ENCODE measurements at regions of chr1 and their contacts with region 1.

Region 1: GRCh38 chr1:24351918-24352627 is 32.9 kb downstream of the GRHL3 start:
- DNase-seq: no peak
- H3K4me3 Mint-ChIP-seq: no peak overlapping the region
- H3K27ac Mint-ChIP-seq: peak overlapping the region; percentile 67
- H3K4me1 Mint-ChIP-seq: peaks cover 45% of the 10 kb centered on the region
- H3K27me3 Mint-ChIP-seq: peaks cover 10% of the 10 kb centered on the region

Region 2: DNA sequence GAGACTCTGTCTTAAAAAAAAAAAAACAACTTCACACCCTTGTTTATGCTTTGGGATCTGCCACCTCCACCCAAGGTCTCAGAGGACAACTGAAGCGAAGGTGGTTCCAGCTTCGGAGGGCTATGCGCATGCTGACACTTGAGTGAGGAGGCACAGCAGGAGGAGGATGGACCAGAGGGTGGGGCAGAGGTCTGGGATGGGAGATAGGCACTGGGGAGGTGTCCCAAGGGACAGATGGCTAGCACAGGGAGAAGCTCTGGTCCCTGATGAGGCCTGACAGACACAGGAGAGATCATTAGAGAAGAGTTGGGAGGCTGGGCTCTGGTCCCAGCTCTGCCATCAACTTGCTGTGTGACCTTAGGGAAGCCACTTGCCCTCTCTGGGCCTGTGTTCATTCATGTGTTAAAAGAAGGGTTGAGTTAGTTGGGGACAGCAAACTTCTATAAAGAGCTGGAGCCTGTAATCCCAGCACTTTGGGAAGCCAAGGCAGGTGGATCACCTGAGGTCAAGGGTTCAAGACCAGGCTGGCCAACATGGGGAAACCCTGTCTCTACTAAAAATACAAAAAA is 837.9 kb before region 1 on chr1:
- intact Hi-C with region 1: no loop called
- DNase-seq: no peak
- H3K4me3 Mint-ChIP-seq: no peak overlapping the region
- H3K27ac Mint-ChIP-seq: peak overlapping the region; percentile 61
- H3K4me1 Mint-ChIP-seq: no peaks in the 10 kb centered on the region
- H3K27me3 Mint-ChIP-seq: no peaks in the 10 kb centered on the region

Region 3: DNA sequence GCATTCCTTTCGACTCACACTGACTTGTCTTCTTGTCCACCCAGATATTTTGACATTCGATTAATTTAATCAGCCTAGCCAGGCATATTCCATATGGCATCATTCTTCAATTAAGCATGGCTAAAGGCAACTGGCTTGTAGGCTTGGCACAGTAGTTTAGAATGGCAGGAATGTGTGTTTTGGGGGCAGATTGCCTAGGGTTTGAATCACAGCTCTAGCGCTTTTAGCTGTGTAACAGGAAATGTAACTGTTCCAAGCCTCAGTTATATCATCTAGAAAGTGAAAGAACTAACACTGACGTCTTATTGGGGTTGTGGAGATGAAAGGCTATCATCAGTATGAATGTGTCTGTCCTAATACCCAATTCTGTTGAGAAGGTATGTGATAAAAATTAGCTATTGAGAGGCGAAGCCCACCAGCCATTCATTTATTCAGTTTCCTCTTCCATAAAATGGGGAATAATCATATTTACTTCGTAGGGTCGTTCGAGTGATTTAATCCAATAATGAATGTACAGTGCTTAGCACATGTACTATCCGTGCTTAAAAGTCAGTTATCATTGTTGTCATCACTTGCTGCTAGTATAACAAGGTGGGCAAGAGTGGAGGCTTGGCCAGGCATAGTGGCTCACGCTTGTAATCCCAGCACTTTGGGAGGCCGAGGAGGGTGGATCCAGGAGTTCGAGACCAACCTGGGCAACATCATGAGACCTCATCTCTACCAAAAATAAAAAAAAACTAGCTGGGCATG is 74.5 kb before region 1 on chr1:
- intact Hi-C with region 1: loop called (anchors 1 kb)
- DNase-seq: no peak
- H3K4me3 Mint-ChIP-seq: peak overlapping the region; percentile 43
- H3K27ac Mint-ChIP-seq: peak overlapping the region; percentile 27
- H3K4me1 Mint-ChIP-seq: peaks cover 13% of the 10 kb centered on the region
- H3K27me3 Mint-ChIP-seq: peaks cover 29% of the 10 kb centered on the region

Region 4: GRCh38 chr1:24321697-24322469 is 30.2 kb before region 1 on chr1:
- intact Hi-C with region 1: loop called (anchors 1 kb)
- DNase-seq: peak; percentile 71
- H3K4me3 Mint-ChIP-seq: peak overlapping the region; percentile 65
- H3K27ac Mint-ChIP-seq: peak overlapping the region; percentile 71
- H3K4me1 Mint-ChIP-seq: peaks cover 48% of the 10 kb centered on the region
- H3K27me3 Mint-ChIP-seq: peaks cover 94% of the 10 kb centered on the region

Region 5: GRCh38 chr1:24364975-24365678 is 13.1 kb after region 1 on chr1:
- intact Hi-C with region 1: loop called (anchors 1 kb)
- DNase-seq: peak; percentile 38
- H3K4me3 Mint-ChIP-seq: peak overlapping the region; percentile 39
- H3K27ac Mint-ChIP-seq: peak overlapping the region; percentile 73
- H3K4me1 Mint-ChIP-seq: peaks cover 40% of the 10 kb centered on the region
- H3K27me3 Mint-ChIP-seq: no peaks in the 10 kb centered on the region

Region 6: GRCh38 chr1:24385160-24385940 is 33.3 kb after region 1 on chr1:
- intact Hi-C with region 1: loop called (anchors 1 kb)
- DNase-seq: no peak
- H3K4me3 Mint-ChIP-seq: peak overlapping the region; percentile 38
- H3K27ac Mint-ChIP-seq: peak overlapping the region; percentile 41
- H3K4me1 Mint-ChIP-seq: peaks cover 36% of the 10 kb centered on the region
- H3K27me3 Mint-ChIP-seq: no peaks in the 10 kb centered on the region